ENCODE measurements at regions of chr21 and their contacts with region 1.

Region 1: GRCh38 chr21:14762734-14763694 is 216.9 kb upstream of the SAMSN1 start:
- DNase-seq: peak; percentile 83
- ATAC-seq: peak; percentile 93
- H3K4me3 ChIP-seq: peak overlapping the region; percentile 24 to 72 (median 48)
- H3K4me3 Mint-ChIP-seq: no peak overlapping the region
- H3K27ac ChIP-seq: peak overlapping the region; percentile 69 to 87
- H3K27ac Mint-ChIP-seq: no peak overlapping the region
- H3K4me1 ChIP-seq: peaks cover 27 to 36% of the 10 kb centered on the region in 2 donors
- H3K4me1 Mint-ChIP-seq: peaks cover 36% of the 10 kb centered on the region
- H3K27me3 ChIP-seq: no peaks in the 10 kb centered on the region
- H3K27me3 Mint-ChIP-seq: no peaks in the 10 kb centered on the region
- CTCF ChIP-seq: no peak

Region 2: DNA sequence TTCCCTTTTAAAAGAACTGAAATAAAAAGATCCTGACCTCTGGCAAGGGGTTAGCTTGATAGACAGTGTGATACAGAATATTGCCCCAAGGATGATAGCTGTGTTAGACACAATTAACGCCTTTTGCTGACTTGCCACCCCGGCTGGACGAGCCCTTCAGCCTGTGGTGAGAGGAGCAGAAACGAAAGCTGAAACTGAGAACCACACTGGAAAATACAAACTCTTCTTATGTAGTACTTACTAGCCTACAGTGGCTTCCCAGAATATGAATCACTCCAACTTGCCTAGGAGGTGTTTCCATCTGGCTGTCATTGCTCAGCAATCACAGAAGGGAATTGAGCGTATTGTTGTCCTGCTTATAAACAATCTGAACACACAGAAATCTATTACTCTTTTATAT is 239.8 kb before region 1 on chr21:
- CTCF ChIA-PET with region 1: no interaction called
- POLR2A ChIA-PET with region 1: no interaction called
- intact Hi-C with region 1: loop called (anchors 5 kb)
- DNase-seq: peak; percentile 58
- ATAC-seq: peak; percentile 67
- H3K4me3 ChIP-seq: peak overlapping the region in 3 of 5 experiments; percentile 25 to 42 (median 29)
- H3K4me3 Mint-ChIP-seq: peak overlapping the region; percentile 83
- H3K27ac ChIP-seq: peak overlapping the region; percentile 12 to 69
- H3K27ac Mint-ChIP-seq: peak overlapping the region; percentile 87
- H3K4me1 ChIP-seq: peaks cover 28 to 33% of the 10 kb centered on the region in 2 donors
- H3K4me1 Mint-ChIP-seq: peaks cover 53% of the 10 kb centered on the region
- H3K27me3 ChIP-seq: no peaks in the 10 kb centered on the region
- H3K27me3 Mint-ChIP-seq: no peaks in the 10 kb centered on the region
- CTCF ChIP-seq: no peak

Region 3: GRCh38 chr21:14686466-14687267 is 76.3 kb before region 1 on chr21:
- CTCF ChIA-PET with region 1: interaction called, 7 read pairs
- POLR2A ChIA-PET with region 1: no interaction called
- intact Hi-C with region 1: loop called (anchors 2 kb)
- DNase-seq: peak; percentile 52
- ATAC-seq: peak; percentile 32
- H3K4me3 ChIP-seq: peak overlapping the region in 3 of 5 experiments; percentile 5 to 18 (median 6)
- H3K4me3 Mint-ChIP-seq: peak overlapping the region; percentile 78
- H3K27ac ChIP-seq: peak overlapping the region; percentile 64 to 80
- H3K27ac Mint-ChIP-seq: peak overlapping the region; percentile 88
- H3K4me1 ChIP-seq: peaks cover 57% of the 10 kb centered on the region in 2 donors
- H3K4me1 Mint-ChIP-seq: peaks cover 56% of the 10 kb centered on the region
- H3K27me3 ChIP-seq: no peaks in the 10 kb centered on the region
- H3K27me3 Mint-ChIP-seq: no peaks in the 10 kb centered on the region
- CTCF ChIP-seq: no peak

Region 4: DNA sequence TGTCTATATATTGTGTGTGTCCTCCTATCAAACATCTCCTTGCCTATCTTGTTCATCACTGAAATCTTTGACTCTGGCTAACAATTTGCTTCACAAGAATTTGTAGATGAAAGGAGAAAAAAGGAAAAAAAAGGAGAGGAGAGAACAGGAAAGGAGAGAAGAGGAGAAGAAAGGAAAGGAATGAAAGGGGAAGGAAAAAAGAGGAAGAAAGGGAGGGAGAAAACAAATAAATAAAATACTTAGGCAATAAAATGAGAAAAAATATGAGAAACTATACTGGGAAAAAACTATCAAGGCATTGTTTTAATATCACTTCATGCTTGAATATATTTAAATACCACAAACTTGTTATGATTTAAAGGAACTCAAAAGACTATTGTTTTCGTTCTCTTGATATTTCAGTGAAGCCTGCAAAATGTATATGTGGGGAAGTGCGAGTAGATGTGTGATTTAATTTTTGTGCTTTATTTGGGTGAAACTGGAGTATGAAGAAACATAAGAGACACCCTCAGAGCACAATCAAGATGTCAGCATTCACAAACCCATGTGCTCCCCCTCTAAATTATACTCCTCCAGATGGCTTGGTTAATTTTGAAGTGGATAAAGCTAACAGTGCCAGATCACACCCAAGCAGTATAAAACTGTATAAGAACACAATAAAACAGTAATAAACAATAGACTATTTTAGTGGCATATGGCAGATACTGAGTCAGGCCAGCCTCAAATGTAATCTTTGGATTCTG is 11.2 kb before region 1 on chr21:
- CTCF ChIA-PET with region 1: no interaction called
- POLR2A ChIA-PET with region 1: no interaction called
- intact Hi-C with region 1: no loop called
- DNase-seq: no peak
- ATAC-seq: no peak
- H3K4me3 ChIP-seq: no peak overlapping the region
- H3K4me3 Mint-ChIP-seq: no peak overlapping the region
- H3K27ac ChIP-seq: no peak overlapping the region
- H3K27ac Mint-ChIP-seq: no peak overlapping the region
- H3K4me1 ChIP-seq: peaks cover 7 to 10% of the 10 kb centered on the region in 2 donors
- H3K4me1 Mint-ChIP-seq: peaks cover 15% of the 10 kb centered on the region
- H3K27me3 ChIP-seq: no peaks in the 10 kb centered on the region
- H3K27me3 Mint-ChIP-seq: no peaks in the 10 kb centered on the region
- CTCF ChIP-seq: no peak

Region 5: DNA sequence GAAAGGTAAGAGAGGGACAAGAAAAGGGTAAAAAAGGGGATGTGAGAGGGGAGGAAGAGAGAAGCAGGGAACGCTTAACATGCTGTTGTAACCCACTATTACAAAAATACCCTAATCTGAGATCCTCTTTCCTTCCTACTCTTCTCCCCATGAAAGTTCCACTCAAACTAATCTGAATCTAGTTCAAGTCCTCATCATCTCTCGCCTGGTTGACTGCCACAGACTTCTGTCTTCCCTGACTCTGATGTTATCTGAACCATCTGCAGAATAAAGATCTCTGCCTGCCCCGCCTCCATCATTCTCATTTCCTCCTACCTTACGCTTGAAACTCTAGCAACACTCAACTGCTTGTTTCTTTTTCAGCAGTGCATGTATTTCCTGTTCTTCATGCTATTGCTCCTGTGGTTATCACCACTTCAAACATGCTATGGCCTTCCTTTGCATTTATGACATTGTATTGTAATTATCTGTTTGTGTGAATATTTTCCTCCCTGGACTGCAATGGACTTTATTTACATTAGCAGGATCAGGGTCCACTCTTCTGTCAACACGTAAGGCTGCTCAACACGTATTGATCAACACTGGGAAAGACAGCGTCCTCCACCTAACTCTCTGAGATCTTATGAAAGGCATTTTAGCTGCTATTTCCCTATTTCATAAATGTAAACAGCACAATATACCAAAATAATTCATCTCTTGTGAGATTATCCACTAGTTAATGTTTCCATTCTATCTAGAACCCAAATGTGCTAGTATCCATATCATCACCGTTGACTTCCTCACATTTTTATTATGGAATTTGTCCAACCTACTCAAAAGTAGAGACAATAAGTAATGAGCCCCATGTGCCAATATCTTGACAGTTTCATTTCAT is 751.3 kb after region 1 on chr21:
- CTCF ChIA-PET with region 1: no interaction called
- POLR2A ChIA-PET with region 1: no interaction called
- intact Hi-C with region 1: loop called (anchors 2 kb)
- DNase-seq: peak; percentile 82
- ATAC-seq: peak; percentile 98
- H3K4me3 ChIP-seq: peak overlapping the region in 2 of 5 experiments; percentile 21 to 35
- H3K4me3 Mint-ChIP-seq: peak overlapping the region; percentile 52
- H3K27ac ChIP-seq: peak overlapping the region; percentile 62 to 83
- H3K27ac Mint-ChIP-seq: peak overlapping the region; percentile 82
- H3K4me1 ChIP-seq: peaks cover 20 to 21% of the 10 kb centered on the region in 2 donors
- H3K4me1 Mint-ChIP-seq: peaks cover 18% of the 10 kb centered on the region
- H3K27me3 ChIP-seq: no peaks in the 10 kb centered on the region
- H3K27me3 Mint-ChIP-seq: no peaks in the 10 kb centered on the region
- CTCF ChIP-seq: no peak